Naive thymus-derived CD4-positive, alpha-beta T cell (primary cell): ENCODE measurements at regions of chr1 and their contacts with region 1.

Region 1: DNA sequence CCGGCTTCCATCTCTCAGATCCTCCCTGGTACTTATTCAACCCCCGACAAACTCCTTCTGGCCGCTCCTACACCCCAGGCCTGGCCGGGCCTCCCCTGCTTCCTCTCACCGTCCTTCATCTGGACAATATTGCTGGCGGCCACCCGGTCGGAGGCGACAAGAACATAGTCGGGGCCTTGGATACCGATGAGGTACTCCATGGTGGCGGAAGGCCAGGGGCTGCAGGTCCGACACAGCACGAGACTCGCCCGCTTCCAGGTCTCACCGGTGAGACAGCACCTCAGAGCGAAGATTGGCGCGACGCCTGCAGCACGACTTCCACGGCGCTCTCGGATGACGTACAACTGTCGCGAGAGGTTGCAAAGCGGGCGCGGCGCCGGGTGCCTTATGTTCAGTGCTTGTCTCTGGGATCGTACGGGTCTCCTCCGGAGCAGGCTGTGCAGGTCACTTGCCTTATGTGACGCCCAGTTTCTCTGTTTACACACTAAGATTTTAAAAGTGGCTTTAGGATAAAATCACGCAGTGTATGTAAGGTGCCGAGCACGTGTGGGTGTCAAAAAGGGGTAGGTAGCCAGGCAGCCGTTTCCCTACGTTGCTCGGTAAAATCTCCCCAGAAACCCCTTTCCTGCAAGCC is at the start of gene PSMB2:
- DNase-seq: peak; percentile 89 to 96 (median 95)
- ATAC-seq: peak; percentile 97
- H3K4me3 ChIP-seq: peak within 1 kb of the TSS; percentile 89
- H3K4me3 Mint-ChIP-seq: peak within 1 kb of the TSS; percentile 97 to 100 (median 100)
- H3K27ac ChIP-seq: peak within 1 kb of the TSS; percentile 92
- H3K27ac Mint-ChIP-seq: peak within 1 kb of the TSS; percentile 98 to 100 (median 99)
- H3K4me1 ChIP-seq: peaks cover 18 to 19% of the 10 kb centered on the region in 2 donors
- H3K4me1 Mint-ChIP-seq: peaks cover 16 to 54% (median 42%) of the 10 kb centered on the region in 7 donors
- H3K27me3 ChIP-seq: no peaks in the 10 kb centered on the region
- H3K27me3 Mint-ChIP-seq: peaks cover 12 to 44% (median 30%) of the 10 kb centered on the region in 5 donors
- total RNA-seq, gene PSMB2: 20.4 to 93.5 (median 23.5) TPM

Region 2: GRCh38 chr1:35505908-35506798 is 135.2 kb before region 1 on chr1:
- CTCF ChIA-PET with region 1: no interaction called
- POLR2A ChIA-PET with region 1: no interaction called
- intact Hi-C with region 1: no loop called
- DNase-seq: peak in 8 of 9 donors; percentile 29 to 73 (median 56)
- ATAC-seq: peak; percentile 84
- H3K4me3 ChIP-seq: peak overlapping the region; percentile 16
- H3K4me3 Mint-ChIP-seq: peak overlapping the region; percentile 75 to 84 (median 78)
- H3K27ac ChIP-seq: peak overlapping the region; percentile 60
- H3K27ac Mint-ChIP-seq: peak overlapping the region; percentile 73 to 97 (median 93)
- H3K4me1 ChIP-seq: peaks cover 32 to 45% of the 10 kb centered on the region in 2 donors
- H3K4me1 Mint-ChIP-seq: peaks cover 44 to 85% (median 82%) of the 10 kb centered on the region in 7 donors
- H3K27me3 ChIP-seq: no peaks in the 10 kb centered on the region
- H3K27me3 Mint-ChIP-seq: no peaks in the 10 kb centered on the region

Region 3: GRCh38 chr1:35577071-35577998 is 64.0 kb before region 1 on chr1:
- CTCF ChIA-PET with region 1: no interaction called
- POLR2A ChIA-PET with region 1: interaction called, 4 read pairs
- intact Hi-C with region 1: loop called (anchors 5 kb)
- DNase-seq: peak in 8 of 9 donors; percentile 44 to 65 (median 60)
- ATAC-seq: peak; percentile 83
- H3K4me3 ChIP-seq: peak overlapping the region; percentile 57
- H3K4me3 Mint-ChIP-seq: peak overlapping the region; percentile 78 to 96 (median 86)
- H3K27ac ChIP-seq: peak overlapping the region; percentile 24
- H3K27ac Mint-ChIP-seq: peak overlapping the region; percentile 40 to 98 (median 74)
- H3K4me1 ChIP-seq: peaks cover 9 to 13% of the 10 kb centered on the region in 2 donors
- H3K4me1 Mint-ChIP-seq: peaks cover 15 to 38% (median 24%) of the 10 kb centered on the region in 7 donors
- H3K27me3 ChIP-seq: no peaks in the 10 kb centered on the region
- H3K27me3 Mint-ChIP-seq: peaks cover 0 to 39% (median 0%) of the 10 kb centered on the region in 5 donors

Region 4: DNA sequence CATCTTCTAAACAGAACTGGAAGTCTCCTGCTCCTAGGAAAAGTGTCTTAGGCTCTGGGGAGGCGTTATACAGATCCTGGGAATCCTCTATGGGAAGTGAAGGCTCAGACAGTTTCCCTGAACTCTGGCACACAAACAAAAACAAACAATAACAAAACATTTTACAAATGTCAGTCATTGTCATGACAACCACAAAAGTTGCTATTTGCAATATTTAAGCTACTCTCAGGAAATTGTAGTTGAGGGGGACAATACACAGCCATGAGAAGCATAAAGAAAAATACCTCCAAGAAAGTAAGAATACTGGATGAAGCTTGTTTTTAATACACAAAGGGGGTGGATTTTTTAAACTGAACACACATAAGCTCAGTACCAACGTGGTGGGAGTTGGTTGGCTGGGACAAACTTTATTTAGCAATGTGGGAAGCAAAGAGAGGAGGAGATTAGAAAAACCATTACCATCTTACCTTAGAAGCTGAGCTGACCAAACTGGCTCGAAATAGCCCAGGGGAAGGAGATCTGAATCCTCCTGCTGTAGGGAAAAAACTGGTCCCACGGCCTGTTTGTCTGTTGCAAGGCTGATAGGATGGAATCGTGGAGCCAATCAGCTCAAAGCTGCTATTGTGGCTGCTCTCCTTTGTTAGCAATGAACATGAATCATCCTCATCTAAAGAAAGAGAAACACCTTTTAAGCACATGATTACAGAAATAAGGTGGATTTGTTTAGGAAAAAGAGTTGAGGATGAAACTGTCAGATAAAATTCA is 106.8 kb after region 1 on chr1:
- CTCF ChIA-PET with region 1: no interaction called
- POLR2A ChIA-PET with region 1: no interaction called
- intact Hi-C with region 1: no loop called
- DNase-seq: no peak
- ATAC-seq: no peak
- H3K4me3 ChIP-seq: no peak overlapping the region
- H3K4me3 Mint-ChIP-seq: no peak overlapping the region
- H3K27ac ChIP-seq: no peak overlapping the region
- H3K27ac Mint-ChIP-seq: no peak overlapping the region
- H3K4me1 ChIP-seq: no peaks in the 10 kb centered on the region
- H3K4me1 Mint-ChIP-seq: peaks cover 0 to 3% (median 0%) of the 10 kb centered on the region in 7 donors
- H3K27me3 ChIP-seq: no peaks in the 10 kb centered on the region
- H3K27me3 Mint-ChIP-seq: no peaks in the 10 kb centered on the region

Region 5: GRCh38 chr1:35835398-35835797 is 194.0 kb after region 1 on chr1:
- CTCF ChIA-PET with region 1: no interaction called
- POLR2A ChIA-PET with region 1: no interaction called
- intact Hi-C with region 1: no loop called
- DNase-seq: no peak
- ATAC-seq: no peak
- H3K4me3 ChIP-seq: no peak overlapping the region
- H3K4me3 Mint-ChIP-seq: no peak overlapping the region
- H3K27ac ChIP-seq: no peak overlapping the region
- H3K27ac Mint-ChIP-seq: no peak overlapping the region
- H3K4me1 ChIP-seq: no peaks in the 10 kb centered on the region
- H3K4me1 Mint-ChIP-seq: no peaks in the 10 kb centered on the region
- H3K27me3 ChIP-seq: no peaks in the 10 kb centered on the region
- H3K27me3 Mint-ChIP-seq: no peaks in the 10 kb centered on the region